Sigmoid colon (tissue), 7 donors: ENCODE measurements at regions of chr1 and their contacts with region 1.

Region 1: DNA sequence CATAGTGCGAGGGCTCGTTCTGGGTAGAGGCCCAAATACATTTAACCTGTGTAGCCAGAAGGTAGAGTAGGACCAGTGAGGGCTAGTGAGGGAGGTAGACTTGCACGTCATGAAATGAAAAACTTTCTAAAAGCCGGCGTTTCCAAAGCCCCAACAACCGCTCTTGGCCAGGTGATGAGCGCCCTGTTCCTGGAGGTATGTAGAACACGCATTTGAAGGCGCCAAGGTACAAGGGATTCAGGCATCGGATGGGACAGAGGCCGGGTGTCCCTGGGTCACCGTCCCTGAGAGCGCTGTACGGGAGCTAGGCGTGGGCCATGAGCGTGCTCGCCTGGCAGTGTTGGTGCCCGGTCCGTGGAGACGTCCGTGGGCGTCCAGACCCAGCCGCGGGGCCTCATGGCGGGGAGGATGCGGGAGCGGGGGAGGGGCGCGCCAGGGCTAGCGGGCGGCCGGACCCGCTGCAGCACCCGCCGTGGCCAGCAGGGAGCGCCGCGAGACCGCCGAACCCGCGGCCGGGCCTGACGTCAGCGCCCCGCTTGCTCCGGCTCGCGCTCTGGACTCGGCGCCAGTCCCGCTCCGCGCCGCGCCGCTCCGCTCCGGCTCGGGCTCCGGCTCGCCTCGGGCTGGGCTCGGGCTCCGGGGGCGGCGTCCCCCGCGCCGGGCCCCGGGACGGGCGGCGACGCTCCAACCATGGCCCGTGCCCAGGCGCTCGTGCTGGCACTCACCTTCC is at the start of gene PTPRU:
- DNase-seq: peak; percentile 90
- H3K4me3 ChIP-seq: peak within 1 kb of the TSS; percentile 58 to 67 (median 60)
- H3K27ac ChIP-seq: peak within 1 kb of the TSS; percentile 44 to 77 (median 62)
- H3K4me1 ChIP-seq: peaks cover 0 to 25% (median 24%) of the 10 kb centered on the region in 4 donors
- H3K27me3 ChIP-seq: peaks cover 0 to 8% (median 0%) of the 10 kb centered on the region in 3 donors
- CTCF ChIP-seq: peak in 3 of 4 experiments; percentile 41 to 79 (median 49)
- EP300 ChIP-seq: no peak
- POLR2A ChIP-seq: no peak
- total RNA-seq, gene PTPRU: 8.2 to 35.7 (median 25.1) TPM

Region 2: DNA sequence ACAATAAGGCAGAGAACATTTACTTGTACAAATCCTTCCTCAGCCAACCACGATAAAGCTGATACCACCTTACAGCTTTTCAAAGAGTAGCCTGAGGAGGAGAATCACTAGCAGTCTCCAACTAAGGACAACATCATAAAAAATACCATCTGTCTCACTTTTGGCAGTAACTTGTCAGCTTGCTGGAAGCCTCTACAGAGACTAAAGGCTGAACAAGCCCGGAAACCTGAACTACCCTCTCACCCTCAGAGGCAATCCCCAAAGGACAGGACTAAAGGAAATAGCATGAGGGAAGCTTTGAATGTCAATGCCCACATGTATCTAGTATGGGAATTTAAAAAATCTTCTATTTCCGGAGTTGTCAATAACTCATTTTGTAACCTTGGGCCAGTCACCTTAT is 65.0 kb before region 1 on chr1:
- intact Hi-C with region 1: no loop called
- DNase-seq: no peak
- H3K4me3 ChIP-seq: no peak overlapping the region
- H3K27ac ChIP-seq: peak overlapping the region in 1 of 4 donors; percentile 1
- H3K4me1 ChIP-seq: peaks cover 0 to 49% (median 42%) of the 10 kb centered on the region in 4 donors
- H3K27me3 ChIP-seq: no peaks in the 10 kb centered on the region
- CTCF ChIP-seq: no peak
- EP300 ChIP-seq: no peak
- POLR2A ChIP-seq: no peak

Region 3: DNA sequence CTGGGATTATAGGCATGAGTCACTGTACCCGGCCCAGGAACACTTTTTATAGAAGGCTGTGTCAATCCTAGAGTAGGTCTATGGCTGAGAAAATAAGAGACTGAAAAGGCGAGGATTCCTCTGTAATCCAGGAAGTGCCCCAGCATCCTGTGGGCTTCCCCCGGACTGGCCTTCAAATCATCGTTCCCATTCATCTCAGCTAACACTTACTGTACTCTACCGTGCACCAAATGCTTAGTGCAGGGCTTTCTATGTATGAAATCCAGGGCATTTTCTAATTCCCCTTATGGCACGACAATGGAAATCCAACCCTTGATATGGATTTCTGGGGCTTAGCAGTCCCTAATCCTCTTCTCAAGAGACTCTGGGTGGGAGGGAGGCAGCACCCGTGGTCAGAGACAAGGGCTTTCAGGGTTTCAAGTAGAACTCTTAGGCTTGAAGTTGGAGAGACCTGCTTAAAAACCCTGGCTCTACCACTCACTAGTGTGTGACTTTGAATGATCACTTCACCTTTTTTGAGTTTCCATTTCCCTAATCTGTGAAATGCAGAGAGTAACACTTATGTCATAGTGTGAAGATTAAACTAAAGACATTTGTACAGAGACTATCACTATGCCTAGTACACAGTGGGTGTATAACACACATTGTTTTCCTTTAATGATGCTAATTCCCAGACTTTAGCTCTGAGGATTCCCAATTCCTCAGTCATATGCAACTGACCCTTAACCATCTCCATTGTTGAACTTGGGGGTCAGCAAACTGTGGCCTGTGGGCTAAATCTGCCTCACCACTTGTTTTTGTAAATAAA is 25.6 kb before region 1 on chr1:
- intact Hi-C with region 1: no loop called
- DNase-seq: no peak
- H3K4me3 ChIP-seq: no peak overlapping the region
- H3K27ac ChIP-seq: no peak overlapping the region
- H3K4me1 ChIP-seq: no peaks in the 10 kb centered on the region
- H3K27me3 ChIP-seq: no peaks in the 10 kb centered on the region
- CTCF ChIP-seq: no peak
- EP300 ChIP-seq: no peak
- POLR2A ChIP-seq: no peak

Region 4: DNA sequence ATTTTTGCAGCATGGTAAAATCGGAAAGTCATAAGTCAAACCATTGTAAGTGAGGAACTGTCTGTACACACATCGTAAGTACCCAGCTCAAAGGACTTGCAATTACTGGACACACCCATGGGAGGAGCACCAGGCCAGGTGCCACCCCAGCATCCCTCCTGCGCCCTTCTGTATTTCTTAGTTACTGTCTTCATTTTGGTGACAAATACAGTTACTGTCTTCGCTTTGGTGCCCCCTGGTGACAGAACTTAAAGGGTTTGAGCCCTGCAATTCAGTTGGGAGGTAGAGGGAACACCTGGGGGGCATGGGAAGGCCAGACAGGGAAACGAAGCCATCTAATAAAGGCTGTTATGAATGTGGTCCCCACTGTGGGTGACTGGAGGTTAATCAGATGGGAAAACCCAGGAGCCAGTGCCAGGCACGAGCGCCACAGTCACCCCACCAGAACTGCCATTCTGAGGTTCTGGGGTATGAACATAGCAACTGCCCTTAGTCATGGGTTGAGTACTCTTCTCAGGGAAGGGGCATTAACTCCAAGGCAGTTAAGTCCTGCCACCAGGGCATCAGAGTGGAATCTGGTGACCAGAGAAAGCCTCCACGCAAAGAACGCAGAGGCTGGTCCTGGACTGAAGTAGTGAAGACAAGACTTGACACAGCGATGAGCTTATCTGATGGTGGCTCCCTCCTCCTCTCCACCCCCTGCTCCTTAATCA is 613.1 kb after region 1 on chr1:
- intact Hi-C with region 1: loop called (anchors 5 kb)
- DNase-seq: no peak
- H3K4me3 ChIP-seq: no peak overlapping the region
- H3K27ac ChIP-seq: no peak overlapping the region
- H3K4me1 ChIP-seq: no peaks in the 10 kb centered on the region
- H3K27me3 ChIP-seq: peaks cover 0 to 36% (median 8%) of the 10 kb centered on the region in 3 donors
- CTCF ChIP-seq: no peak
- EP300 ChIP-seq: no peak
- POLR2A ChIP-seq: no peak

Region 5: DNA sequence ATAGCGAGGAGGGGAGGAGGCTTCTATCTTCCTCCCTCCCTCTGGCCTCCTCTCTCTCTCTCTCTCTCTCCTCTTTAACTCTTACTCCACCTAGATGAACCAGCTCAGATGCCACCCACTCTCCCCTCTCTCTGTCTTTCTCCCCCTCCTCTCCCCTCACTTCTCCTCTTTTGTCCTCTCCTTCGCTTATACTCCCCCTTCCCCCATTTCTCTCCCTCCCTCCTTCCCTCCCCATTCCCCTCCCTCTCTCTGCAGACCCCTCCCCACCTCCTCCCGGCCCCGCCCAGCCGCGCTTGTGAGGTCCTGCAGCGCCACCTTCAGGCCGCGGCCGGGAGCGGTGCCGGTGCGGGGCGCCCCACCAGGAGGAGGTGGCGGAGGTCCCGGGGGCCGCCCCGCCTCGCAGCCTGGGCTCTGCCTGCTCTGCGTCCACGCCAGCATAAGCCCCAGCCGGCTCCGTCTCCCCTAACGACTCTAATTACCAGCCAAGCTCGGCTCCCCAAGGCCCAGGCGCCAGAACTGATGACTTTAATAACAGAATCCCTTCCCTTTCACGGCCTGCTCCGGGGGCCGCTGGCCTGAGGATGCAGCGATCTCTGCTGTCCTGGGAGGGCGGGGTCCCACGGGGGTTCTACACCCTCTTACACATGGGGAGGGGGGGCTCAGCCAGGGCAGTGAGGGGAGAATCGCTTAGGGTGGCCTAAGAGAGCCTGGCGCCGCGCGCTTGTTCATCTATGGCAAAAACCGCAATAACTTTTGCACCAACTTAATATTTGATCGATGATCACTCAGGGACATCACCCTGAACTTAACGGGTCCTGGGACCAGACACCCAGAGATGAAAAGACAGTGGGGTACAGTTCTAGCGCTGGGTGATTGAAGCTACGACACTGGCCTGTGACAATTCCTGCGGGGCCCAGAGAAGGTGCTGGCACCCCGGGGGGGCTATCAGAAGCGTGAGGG is 850.0 kb after region 1 on chr1:
- intact Hi-C with region 1: loop called (anchors 5 kb)
- DNase-seq: peak; percentile 71
- H3K4me3 ChIP-seq: peak overlapping the region in 2 of 4 donors; percentile 17 to 31
- H3K27ac ChIP-seq: no peak overlapping the region
- H3K4me1 ChIP-seq: peaks cover 2 to 34% (median 31%) of the 10 kb centered on the region in 4 donors
- H3K27me3 ChIP-seq: peaks cover 0 to 6% (median 6%) of the 10 kb centered on the region in 3 donors
- CTCF ChIP-seq: peak in 3 of 4 experiments; percentile 31 to 75 (median 65)
- EP300 ChIP-seq: no peak
- POLR2A ChIP-seq: no peak

Region 6: GRCh38 chr1:30111431-30111830 is 875.3 kb after region 1 on chr1:
- intact Hi-C with region 1: loop called (anchors 2 kb)
- DNase-seq: no peak
- H3K4me3 ChIP-seq: no peak overlapping the region
- H3K27ac ChIP-seq: no peak overlapping the region
- H3K4me1 ChIP-seq: no peaks in the 10 kb centered on the region
- H3K27me3 ChIP-seq: peaks cover 0 to 70% (median 0%) of the 10 kb centered on the region in 3 donors
- CTCF ChIP-seq: peak in 2 of 4 experiments; percentile 24 to 38
- EP300 ChIP-seq: no peak
- POLR2A ChIP-seq: no peak

Region 7: DNA sequence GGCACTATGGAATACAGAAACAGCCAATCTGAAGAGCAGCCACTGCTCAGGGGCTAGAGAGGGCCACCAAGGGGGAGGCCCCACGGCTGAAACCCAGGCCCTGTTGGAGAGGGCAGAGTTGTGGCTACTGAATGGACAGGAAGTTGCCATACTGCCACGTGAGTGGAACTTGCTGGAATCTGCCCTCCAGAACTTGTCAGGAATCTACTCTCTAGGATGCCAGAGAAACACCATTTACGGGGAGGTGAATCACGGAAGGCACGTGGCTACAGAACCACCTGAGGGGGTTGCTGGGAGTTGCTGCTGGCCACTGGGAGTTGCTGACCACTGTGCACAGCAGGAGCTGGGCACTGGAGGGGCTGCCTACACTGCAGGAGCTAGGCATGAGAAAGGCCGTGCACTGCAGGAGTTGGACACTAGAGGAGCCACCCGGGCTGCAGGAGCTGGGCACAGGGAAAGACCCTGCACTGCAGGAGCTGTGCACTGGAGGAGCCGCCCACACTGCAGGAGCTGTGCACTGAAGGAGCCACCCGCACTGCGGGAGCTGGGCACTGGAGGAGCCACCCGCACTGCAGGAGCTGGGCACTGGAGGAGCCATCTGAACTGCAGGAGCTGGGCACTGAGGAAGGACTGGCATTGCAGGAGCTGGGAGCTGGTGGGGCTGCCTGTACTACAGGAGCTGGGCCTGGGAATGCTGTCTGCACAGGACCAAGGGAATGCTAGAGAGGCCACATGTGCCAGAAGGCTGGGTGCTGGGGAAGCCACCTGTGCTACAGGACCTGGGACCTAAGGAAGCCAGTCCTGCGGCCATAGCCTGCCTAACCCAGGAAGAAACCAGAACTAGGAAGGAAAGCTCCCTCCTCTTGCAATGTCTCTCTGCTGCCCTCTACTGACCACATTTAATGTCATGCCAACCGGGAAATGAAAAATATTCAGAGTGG is 1143.8 kb after region 1 on chr1:
- intact Hi-C with region 1: loop called (anchors 1 kb)
- DNase-seq: peak; percentile 68
- H3K4me3 ChIP-seq: no peak overlapping the region
- H3K27ac ChIP-seq: no peak overlapping the region
- H3K4me1 ChIP-seq: peaks cover 0 to 17% (median 11%) of the 10 kb centered on the region in 4 donors
- H3K27me3 ChIP-seq: peaks cover 0 to 38% (median 0%) of the 10 kb centered on the region in 3 donors
- CTCF ChIP-seq: peak; percentile 48 to 83 (median 72)
- EP300 ChIP-seq: no peak
- POLR2A ChIP-seq: no peak

Region 8: GRCh38 chr1:30707412-30708360 is 1471.6 kb after region 1 on chr1:
- intact Hi-C with region 1: loop called (anchors 2 kb)
- DNase-seq: peak; percentile 87
- H3K4me3 ChIP-seq: no peak overlapping the region
- H3K27ac ChIP-seq: no peak overlapping the region
- H3K4me1 ChIP-seq: peaks cover 0 to 44% (median 36%) of the 10 kb centered on the region in 4 donors
- H3K27me3 ChIP-seq: no peaks in the 10 kb centered on the region
- CTCF ChIP-seq: peak; percentile 81 to 94 (median 90)
- EP300 ChIP-seq: no peak
- POLR2A ChIP-seq: no peak

Region 9: DNA sequence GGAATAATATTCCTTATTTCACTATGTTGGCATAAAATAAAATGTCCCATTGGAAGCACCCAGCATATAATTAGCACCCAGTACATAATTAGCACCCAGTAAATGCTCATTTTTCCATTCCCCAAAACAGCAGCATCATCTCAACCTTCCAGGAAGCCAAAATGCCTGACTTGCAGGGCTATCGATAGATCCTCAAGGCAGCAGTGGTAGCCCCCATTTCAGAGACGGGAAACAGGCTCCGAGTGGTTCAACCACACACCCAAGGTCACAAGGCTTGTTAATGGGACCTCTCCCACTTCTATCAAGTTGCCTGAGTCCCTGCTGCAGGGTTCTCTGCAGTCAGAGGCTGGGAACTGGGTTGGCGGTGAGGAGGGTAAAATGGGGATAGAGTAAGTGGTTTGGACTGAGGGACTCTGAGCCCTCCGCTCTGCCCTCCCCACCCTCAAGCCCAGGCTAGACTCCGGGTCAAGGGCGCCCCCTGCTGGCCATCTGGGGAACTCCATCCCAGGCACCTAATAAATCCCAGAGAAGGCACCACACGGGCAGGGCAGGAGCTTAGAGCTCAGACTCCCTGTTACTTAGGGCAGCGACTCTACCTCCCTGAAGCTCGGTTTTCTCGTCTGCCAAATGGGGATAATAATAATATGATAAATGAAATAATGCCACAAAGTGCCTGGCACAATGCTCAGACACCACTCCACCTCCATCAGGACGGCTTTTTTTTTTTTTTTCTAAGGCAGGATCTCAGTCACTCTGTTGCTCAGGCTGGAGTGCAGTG is 1543.4 kb after region 1 on chr1:
- intact Hi-C with region 1: loop called (anchors 5 kb)
- DNase-seq: peak; percentile 91
- H3K4me3 ChIP-seq: no peak overlapping the region
- H3K27ac ChIP-seq: no peak overlapping the region
- H3K4me1 ChIP-seq: peaks cover 0 to 7% (median 0%) of the 10 kb centered on the region in 4 donors
- H3K27me3 ChIP-seq: no peaks in the 10 kb centered on the region
- CTCF ChIP-seq: peak; percentile 89 to 99 (median 96)
- EP300 ChIP-seq: no peak
- POLR2A ChIP-seq: no peak